Cardiac septum (tissue), 1 donor: ENCODE measurements at regions of chr4 and their contacts with region 1.

Region 1: GRCh38 chr4:20544645-20545044 is 155.6 kb upstream of the PACRGL start:
- DNase-seq: no peak

Region 2: DNA sequence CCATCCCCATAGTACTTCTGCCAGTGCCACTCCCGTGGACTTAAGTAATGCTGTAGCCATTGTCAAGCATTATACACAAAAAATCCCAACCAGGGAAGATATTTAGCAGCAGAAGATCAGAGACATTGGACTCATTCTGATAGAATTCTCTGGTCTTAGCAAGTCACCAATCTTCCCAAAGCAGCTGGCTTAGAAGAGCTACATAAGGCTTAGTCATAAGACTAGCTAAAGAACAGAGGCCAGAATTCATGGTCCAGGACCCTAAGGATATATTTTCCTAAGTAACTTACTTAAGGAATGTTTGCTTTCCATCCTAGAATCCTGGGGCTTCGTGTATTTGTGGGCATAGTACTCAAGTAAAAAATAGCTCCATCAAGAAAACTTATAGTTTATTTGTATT is 393.2 kb before region 1 on chr4:
- intact Hi-C with region 1: no loop called
- DNase-seq: no peak

Region 3: GRCh38 chr4:20299515-20299914 is 245.1 kb before region 1 on chr4:
- intact Hi-C with region 1: loop called (anchors 10 kb)
- DNase-seq: no peak

Region 4: GRCh38 chr4:20422398-20422797 is 122.2 kb before region 1 on chr4:
- intact Hi-C with region 1: loop called (anchors 10 kb)
- DNase-seq: no peak

Region 5: GRCh38 chr4:20652231-20652885 is 107.7 kb after region 1 on chr4:
- intact Hi-C with region 1: no loop called
- DNase-seq: no peak